ENCODE measurements at regions of chr20 and their contacts with region 1.

Region 1: GRCh38 chr20:8790442-8791074 is 278.3 kb upstream of the PLCB4 start:
- DNase-seq: peak; percentile 61
- ATAC-seq: peak; percentile 83
- H3K4me3 ChIP-seq: no peak overlapping the region
- H3K27ac ChIP-seq: no peak overlapping the region
- H3K4me1 ChIP-seq: no peaks in the 10 kb centered on the region
- H3K27me3 ChIP-seq: no peaks in the 10 kb centered on the region
- CTCF ChIP-seq: peak; percentile 92
- EP300 ChIP-seq: no peak
- POLR2A ChIP-seq: no peak
- RAD21 ChIP-seq: peak; percentile 88

Region 2: DNA sequence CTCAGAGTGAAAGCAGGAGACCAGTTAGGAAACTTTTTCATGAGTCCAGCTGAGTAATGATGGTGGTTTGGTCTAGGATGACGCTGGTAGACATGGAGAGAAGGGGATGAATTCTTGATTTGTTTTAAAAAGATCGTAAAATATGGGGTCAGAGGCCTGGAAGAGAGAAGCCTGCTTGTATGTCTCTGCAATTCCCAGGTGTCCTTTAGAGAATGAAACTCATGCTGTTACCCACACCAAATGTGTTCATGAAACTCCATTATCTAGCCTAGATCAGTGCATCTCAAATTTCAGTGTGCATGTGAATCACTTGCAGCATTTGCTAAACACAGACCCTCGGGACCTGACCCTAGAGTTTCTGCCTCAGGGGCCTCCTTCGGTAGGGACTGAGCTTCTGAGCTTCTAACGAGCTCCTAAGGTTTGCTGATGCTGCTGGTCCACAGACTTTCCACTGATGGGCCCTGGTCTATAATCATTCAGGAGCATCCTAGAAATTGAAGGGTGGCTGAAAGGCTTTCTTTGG is 23.6 kb before region 1 on chr20:
- CTCF ChIA-PET with region 1: no interaction called
- POLR2A ChIA-PET with region 1: no interaction called
- in situ Hi-C with region 1: no loop called
- intact Hi-C with region 1: no loop called
- DNase-seq: no peak
- ATAC-seq: no peak
- H3K4me3 ChIP-seq: no peak overlapping the region
- H3K27ac ChIP-seq: no peak overlapping the region
- H3K4me1 ChIP-seq: no peaks in the 10 kb centered on the region
- H3K27me3 ChIP-seq: no peaks in the 10 kb centered on the region
- CTCF ChIP-seq: no peak
- EP300 ChIP-seq: no peak
- POLR2A ChIP-seq: no peak
- RAD21 ChIP-seq: no peak

Region 3: DNA sequence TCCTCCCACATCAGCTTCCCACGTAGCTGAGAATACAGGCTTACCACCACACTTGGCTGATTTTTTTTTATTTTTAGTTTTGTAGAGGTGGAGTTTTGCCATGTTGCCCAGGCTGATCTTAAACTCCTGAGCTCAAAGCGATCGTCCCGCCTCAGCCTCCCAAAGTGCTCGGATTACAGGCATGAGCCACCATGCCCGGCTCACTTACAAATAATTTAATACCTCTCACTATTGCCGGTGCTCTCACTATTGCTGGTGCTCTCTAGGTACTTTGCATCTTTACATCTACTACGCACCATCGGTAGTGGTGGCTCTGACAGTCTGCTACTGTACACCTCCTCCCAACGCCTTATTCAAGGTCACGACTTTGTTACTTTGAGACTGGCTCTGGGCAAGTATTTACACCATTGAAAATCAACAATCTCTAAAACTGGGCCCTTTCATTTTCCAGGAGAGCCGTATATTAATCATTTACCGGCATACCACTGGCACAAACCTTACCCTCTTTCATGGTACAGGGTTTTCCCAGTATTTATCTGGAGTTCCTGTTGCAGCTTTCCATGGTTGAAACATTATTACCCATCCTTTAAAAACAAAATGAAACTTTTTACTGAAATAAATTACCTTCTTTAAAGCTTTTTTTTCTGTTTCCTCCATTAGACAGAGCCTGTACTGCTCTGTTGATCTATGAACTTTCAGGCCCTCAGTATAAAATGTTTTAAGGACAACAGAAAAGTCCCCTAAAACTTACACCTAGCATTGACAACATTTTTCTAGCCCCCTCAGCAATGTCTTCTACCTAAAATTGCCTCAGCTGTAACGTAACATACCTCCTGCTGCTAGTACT is 18.8 kb after region 1 on chr20:
- CTCF ChIA-PET with region 1: no interaction called
- POLR2A ChIA-PET with region 1: no interaction called
- in situ Hi-C with region 1: no loop called
- intact Hi-C with region 1: loop called (anchors 1 kb)
- DNase-seq: peak; percentile 95
- ATAC-seq: peak; percentile 98
- H3K4me3 ChIP-seq: peak overlapping the region in 2 of 3 experiments; percentile 9 to 34; a peak in 1 of 6 replicates
- H3K27ac ChIP-seq: peak overlapping the region; percentile 74
- H3K4me1 ChIP-seq: peaks cover 59% of the 10 kb centered on the region
- H3K27me3 ChIP-seq: no peaks in the 10 kb centered on the region
- CTCF ChIP-seq: no peak
- EP300 ChIP-seq: peak; percentile 70 to 90; a peak in 3 of 4 replicates
- POLR2A ChIP-seq: no peak
- RAD21 ChIP-seq: no peak

Region 4: DNA sequence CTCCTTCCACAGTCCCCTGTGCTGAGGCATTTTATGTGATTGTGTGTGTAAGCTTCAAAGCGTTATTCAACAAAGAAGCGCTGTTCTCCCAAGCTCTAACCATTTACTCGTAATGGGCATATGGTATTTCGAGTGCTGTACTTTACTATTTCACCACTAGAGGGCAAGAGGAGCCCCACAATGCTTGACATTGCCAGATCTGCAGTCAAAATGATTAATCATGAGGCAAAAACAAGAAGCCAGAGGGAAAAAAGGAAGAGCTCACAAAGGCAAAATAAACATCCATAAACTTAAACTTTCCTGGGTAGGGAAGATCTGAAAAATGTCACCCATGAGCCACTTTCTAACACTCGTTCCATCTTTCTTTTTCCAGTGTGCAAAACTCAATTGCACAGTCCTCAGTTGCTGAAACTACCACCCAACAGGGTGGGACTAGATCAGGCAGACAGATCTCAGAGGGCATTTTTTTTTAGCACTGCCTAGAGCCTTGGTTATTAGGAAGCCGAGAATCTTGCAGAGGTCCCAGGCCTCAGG is 63.3 kb after region 1 on chr20:
- CTCF ChIA-PET with region 1: interaction called, 10 read pairs
- POLR2A ChIA-PET with region 1: no interaction called
- in situ Hi-C with region 1: no loop called
- intact Hi-C with region 1: loop called (anchors 1 kb)
- DNase-seq: peak; percentile 89
- ATAC-seq: peak; percentile 95
- H3K4me3 ChIP-seq: no peak overlapping the region
- H3K27ac ChIP-seq: no peak overlapping the region
- H3K4me1 ChIP-seq: peaks cover 19% of the 10 kb centered on the region
- H3K27me3 ChIP-seq: no peaks in the 10 kb centered on the region
- CTCF ChIP-seq: peak; percentile 91
- EP300 ChIP-seq: no peak
- POLR2A ChIP-seq: no peak
- RAD21 ChIP-seq: peak; percentile 79

Region 5: DNA sequence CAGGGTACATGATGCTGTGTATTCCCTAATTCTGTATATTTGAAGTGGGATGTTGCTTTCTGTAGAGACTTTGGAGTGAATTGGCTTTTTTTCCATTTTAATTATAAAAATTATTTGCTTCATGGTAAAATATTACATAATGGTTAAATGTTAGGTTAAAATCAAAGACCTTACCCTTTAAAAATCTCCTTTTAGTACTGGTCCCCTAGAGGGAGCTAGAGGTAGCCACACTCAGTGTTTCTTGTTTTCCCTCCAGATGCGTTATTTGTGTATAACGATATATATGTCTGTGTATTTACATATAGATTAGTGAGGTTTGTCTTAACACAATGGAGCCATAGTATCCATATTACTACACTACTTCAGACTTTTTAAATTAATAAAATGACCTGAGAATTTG is 425.0 kb after region 1 on chr20:
- CTCF ChIA-PET with region 1: interaction called, 3 read pairs
- POLR2A ChIA-PET with region 1: no interaction called
- in situ Hi-C with region 1: no loop called
- intact Hi-C with region 1: loop called (anchors 1 kb)
- DNase-seq: peak; percentile 41
- ATAC-seq: peak; percentile 78
- H3K4me3 ChIP-seq: no peak overlapping the region
- H3K27ac ChIP-seq: no peak overlapping the region
- H3K4me1 ChIP-seq: no peaks in the 10 kb centered on the region
- H3K27me3 ChIP-seq: peaks cover 0 to 14% of the 10 kb centered on the region in 2 experiments; a peak in 2 of 5 replicates
- CTCF ChIP-seq: peak; percentile 47
- EP300 ChIP-seq: no peak
- POLR2A ChIP-seq: no peak
- RAD21 ChIP-seq: peak; percentile 35; the same call in 1 of the 2 replicates

Region 6: DNA sequence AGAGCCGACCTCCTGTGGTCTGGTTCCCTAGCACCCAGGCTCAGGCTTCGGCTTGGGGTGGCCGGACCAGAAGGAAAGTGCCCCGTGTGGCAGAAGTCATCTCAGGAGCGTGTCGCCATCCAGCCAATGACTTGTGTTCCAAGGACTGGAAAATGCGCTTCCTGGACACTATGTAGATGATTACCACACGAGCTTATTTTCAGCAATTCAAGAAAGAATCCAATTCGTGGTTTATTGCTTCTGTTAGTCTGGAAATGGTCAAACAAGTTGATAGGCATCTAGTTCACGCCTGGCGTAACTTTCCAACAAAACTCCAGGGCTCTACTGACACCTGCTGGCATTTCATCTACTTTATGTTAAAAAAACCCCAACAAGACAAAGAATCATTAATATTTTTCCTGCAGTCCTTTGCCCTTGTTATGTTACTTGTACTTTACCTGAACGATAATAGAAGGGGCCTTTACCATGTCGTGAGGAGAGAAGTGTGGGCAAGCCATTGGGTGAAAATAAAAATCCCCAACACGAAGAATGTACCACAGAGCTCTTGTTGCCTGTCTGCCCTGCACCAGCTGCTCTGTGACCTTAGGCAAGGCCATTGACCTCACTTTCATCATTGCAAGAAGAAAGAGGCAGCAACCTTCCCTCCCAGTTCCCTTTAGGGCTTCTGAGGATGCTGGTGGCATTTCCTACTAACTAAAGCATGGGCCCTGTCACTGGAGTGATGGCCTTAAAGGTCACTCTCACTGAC is 569.2 kb after region 1 on chr20:
- CTCF ChIA-PET with region 1: interaction called, 23 read pairs
- POLR2A ChIA-PET with region 1: no interaction called
- in situ Hi-C with region 1: loop called (anchors 10 kb)
- intact Hi-C with region 1: loop called (anchors 1 kb)
- DNase-seq: peak; percentile 67
- ATAC-seq: peak; percentile 97
- H3K4me3 ChIP-seq: peak overlapping the region in 1 of 3 experiments; percentile 31; a peak in 2 of 6 replicates
- H3K27ac ChIP-seq: no peak overlapping the region
- H3K4me1 ChIP-seq: peaks cover 11% of the 10 kb centered on the region
- H3K27me3 ChIP-seq: peaks cover 0 to 3% of the 10 kb centered on the region in 2 experiments; a peak in 1 of 5 replicates
- CTCF ChIP-seq: peak; percentile 83
- EP300 ChIP-seq: no peak
- POLR2A ChIP-seq: no peak
- RAD21 ChIP-seq: peak; percentile 80; the same call in 1 of the 2 replicates

Region 7: DNA sequence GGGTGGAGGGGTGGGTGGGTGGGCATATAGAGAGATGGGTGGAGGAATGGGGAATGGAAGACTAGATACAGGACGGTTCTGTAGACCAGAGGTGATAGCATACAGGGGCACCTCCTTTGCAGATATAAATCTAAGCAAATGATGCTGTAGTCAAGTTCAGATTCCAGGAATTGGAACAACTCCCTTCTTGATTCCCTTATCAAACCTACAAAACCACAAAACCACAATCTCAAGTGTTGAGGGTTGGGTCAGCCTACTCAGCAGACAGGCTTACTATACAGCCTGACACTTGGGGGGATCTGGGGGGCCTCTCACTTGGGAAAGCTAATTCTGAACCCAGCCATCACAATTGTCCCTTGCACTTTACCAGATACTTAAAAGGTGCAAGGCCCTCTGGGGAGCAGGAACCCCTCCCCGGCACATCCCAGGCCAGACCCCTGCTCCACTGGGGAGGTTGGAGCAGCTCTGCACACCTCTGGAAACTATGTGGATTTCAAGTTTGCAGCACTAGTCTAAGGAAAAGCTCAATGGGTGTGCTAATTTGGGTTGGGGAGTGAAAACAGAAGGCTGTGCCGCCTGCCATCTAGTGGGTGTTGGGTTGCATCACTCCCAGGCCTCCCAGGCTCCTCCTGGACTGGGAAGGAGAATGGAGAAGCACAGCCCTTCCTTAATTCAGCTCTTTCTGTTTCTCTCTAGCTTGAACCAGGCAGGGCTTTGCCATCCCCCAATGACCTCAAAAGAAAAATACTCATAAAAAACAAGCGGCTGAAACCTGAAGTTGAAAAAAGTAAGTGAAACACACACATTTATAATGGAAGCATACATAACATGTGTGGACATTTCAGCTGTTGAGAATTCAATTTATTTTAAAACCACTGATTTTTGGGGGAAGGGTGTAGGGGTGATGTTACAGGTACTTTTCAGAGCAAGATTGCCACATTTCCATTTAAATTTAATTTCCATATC is 602.6 kb after region 1 on chr20:
- CTCF ChIA-PET with region 1: interaction called, 10 read pairs
- POLR2A ChIA-PET with region 1: no interaction called
- in situ Hi-C with region 1: no loop called
- intact Hi-C with region 1: loop called (anchors 1 kb)
- DNase-seq: peak; percentile 31
- ATAC-seq: peak; percentile 98
- H3K4me3 ChIP-seq: no peak overlapping the region
- H3K27ac ChIP-seq: no peak overlapping the region
- H3K4me1 ChIP-seq: no peaks in the 10 kb centered on the region
- H3K27me3 ChIP-seq: peaks cover 0 to 6% of the 10 kb centered on the region in 2 experiments; a peak in 1 of 5 replicates
- CTCF ChIP-seq: peak; percentile 78
- EP300 ChIP-seq: no peak
- POLR2A ChIP-seq: no peak
- RAD21 ChIP-seq: peak; percentile 57

Measured in HepG2 (cell line).